ENCODE measurements at regions of chr5 and their contacts with region 1.

Region 1: DNA sequence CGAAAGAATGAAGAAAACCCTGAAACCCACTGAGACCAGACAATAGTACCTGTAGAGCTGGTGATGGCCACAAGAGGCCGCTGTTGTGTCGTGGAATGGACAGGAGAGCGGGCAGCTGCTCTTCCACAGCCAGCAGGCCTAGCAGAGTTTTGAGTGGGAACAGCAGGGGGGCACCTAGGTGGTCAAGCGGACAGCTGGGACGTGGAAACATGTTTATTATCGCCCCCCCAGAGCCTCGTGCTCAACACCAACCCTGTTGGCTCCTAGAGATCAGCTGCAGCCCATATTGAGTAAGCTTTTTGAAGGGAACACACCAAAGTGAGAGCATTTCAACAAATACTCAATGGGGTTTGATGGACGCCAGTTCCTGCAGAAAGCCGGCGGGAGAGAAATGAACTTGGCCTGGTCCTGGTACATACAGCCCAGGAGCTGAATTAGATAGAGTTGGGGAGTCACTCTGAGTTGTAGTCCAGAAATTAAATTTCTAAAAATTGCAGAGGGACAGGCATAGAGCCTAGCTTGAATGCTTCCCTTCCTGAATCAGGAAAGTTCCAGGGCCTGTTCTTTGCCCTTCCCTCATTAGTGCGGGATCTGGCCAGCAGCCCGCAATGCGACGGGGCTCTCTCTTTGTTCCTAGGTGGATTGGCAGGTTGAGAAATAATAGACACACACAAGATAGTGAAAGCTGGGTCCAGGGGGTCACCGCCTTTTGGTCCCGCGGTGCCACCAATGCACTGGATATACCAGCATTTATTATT is 33.8 kb downstream of the MFAP3 start:
- DNase-seq: peak; percentile 72
- ATAC-seq: peak; percentile 97
- H3K4me3 Mint-ChIP-seq: no peak overlapping the region
- H3K27ac Mint-ChIP-seq: no peak overlapping the region
- H3K4me1 Mint-ChIP-seq: peaks cover 2% of the 10 kb centered on the region
- H3K27me3 Mint-ChIP-seq: peaks cover 13% of the 10 kb centered on the region
- CTCF ChIP-seq: peak; percentile 56

Region 2: GRCh38 chr5:154058055-154059038 is 14.2 kb before region 1 on chr5:
- CTCF ChIA-PET with region 1: interaction called, 10 read pairs
- POLR2A ChIA-PET with region 1: no interaction called
- intact Hi-C with region 1: no loop called
- DNase-seq: no peak
- ATAC-seq: peak; percentile 42
- H3K4me3 Mint-ChIP-seq: peak overlapping the region; percentile 20
- H3K27ac Mint-ChIP-seq: no peak overlapping the region
- H3K4me1 Mint-ChIP-seq: peaks cover 23% of the 10 kb centered on the region
- H3K27me3 Mint-ChIP-seq: no peaks in the 10 kb centered on the region
- CTCF ChIP-seq: no peak

Region 3: GRCh38 chr5:154238776-154239481 is 166.3 kb after region 1 on chr5:
- CTCF ChIA-PET with region 1: interaction called, 6 read pairs
- POLR2A ChIA-PET with region 1: no interaction called
- intact Hi-C with region 1: loop called (anchors 5 kb)
- DNase-seq: peak; percentile 50
- ATAC-seq: peak; percentile 97
- H3K4me3 Mint-ChIP-seq: peak overlapping the region; percentile 25
- H3K27ac Mint-ChIP-seq: peak overlapping the region; percentile 43
- H3K4me1 Mint-ChIP-seq: peaks cover 67% of the 10 kb centered on the region
- H3K27me3 Mint-ChIP-seq: no peaks in the 10 kb centered on the region
- CTCF ChIP-seq: no peak

Region 4: GRCh38 chr5:154467655-154468354 is 395.2 kb after region 1 on chr5:
- CTCF ChIA-PET with region 1: interaction called, 12 read pairs
- POLR2A ChIA-PET with region 1: no interaction called
- intact Hi-C with region 1: loop called (anchors 1 kb)
- DNase-seq: peak; percentile 70
- ATAC-seq: peak; percentile 89
- H3K4me3 Mint-ChIP-seq: no peak overlapping the region
- H3K27ac Mint-ChIP-seq: no peak overlapping the region
- H3K4me1 Mint-ChIP-seq: no peaks in the 10 kb centered on the region
- H3K27me3 Mint-ChIP-seq: peaks cover 30% of the 10 kb centered on the region
- CTCF ChIP-seq: peak; percentile 44

Region 5: DNA sequence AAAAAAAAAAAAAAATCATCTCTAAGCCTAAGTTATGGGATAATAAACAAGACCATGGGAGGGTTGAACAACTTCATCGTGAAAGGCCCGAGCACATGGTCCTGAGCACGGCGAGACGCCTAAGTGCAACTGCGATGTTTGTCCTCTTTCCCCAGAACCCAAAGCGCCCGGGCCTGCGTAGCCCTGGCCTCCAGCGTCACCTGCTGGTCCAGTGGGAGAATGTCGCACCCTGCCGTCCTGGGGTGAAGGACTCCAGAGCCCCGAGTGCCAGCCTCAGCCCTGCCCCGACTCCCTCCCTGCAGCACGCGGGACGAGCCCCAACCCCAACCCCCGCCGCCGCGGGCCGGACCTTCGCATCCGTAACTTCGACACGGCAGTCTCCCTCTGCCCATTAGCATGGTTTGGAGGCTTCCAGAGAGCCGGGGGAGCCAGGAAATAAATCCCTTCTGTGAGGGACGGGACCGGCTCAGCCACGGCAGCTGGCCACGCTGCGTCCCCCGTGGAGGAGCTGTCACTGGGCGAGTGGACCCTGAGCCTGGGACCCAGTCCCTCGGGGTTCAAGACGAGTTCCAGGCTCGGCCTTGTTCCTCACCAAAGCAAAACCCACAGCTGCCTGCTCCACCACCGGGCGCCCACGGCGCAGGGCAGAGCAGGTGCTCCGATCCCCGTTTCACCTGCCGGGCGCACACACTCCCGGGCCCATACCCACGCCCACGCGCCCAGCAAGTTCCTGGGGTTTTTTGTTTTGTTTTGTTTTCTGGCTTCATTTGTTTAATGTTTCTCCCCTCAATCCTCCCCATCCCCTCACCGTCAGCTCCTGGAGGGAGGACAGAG is 537.9 kb after region 1 on chr5:
- CTCF ChIA-PET with region 1: no interaction called
- POLR2A ChIA-PET with region 1: no interaction called
- intact Hi-C with region 1: loop called (anchors 1 kb)
- DNase-seq: peak; percentile 31
- ATAC-seq: peak; percentile 82
- H3K4me3 Mint-ChIP-seq: peak overlapping the region; percentile 58
- H3K27ac Mint-ChIP-seq: no peak overlapping the region
- H3K4me1 Mint-ChIP-seq: peaks cover 16% of the 10 kb centered on the region
- H3K27me3 Mint-ChIP-seq: peaks cover 46% of the 10 kb centered on the region
- CTCF ChIP-seq: no peak

Region 6: GRCh38 chr5:154945695-154946301 is 873.2 kb after region 1 on chr5:
- CTCF ChIA-PET with region 1: no interaction called
- POLR2A ChIA-PET with region 1: no interaction called
- intact Hi-C with region 1: no loop called
- DNase-seq: no peak
- ATAC-seq: no peak
- H3K4me3 Mint-ChIP-seq: no peak overlapping the region
- H3K27ac Mint-ChIP-seq: no peak overlapping the region
- H3K4me1 Mint-ChIP-seq: peaks cover 28% of the 10 kb centered on the region
- H3K27me3 Mint-ChIP-seq: no peaks in the 10 kb centered on the region
- CTCF ChIP-seq: no peak